ENCODE measurements at regions of chr15 and their contacts with region 1.

Region 1: DNA sequence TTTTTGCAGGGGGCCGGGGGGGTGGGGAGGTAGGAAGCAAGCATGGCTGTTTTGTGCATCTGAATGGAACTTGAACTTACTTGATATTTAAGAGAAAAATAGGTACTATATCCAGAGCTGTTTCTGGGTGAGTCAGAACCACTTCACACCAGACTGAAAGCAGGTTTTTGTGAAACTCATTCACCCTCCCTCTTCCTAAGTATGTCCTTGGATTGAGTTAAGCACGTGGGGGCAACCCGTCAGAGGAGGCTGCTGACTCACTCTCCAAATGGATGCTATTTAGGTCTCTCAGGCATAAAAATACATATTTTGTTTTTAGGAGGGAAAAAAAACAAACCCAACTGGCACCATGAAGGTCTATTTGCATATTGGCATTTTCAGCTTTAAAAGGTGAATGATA is 270.3 kb downstream of the RYR3 start:
- DNase-seq: no peak
- ATAC-seq: no peak

Region 2: DNA sequence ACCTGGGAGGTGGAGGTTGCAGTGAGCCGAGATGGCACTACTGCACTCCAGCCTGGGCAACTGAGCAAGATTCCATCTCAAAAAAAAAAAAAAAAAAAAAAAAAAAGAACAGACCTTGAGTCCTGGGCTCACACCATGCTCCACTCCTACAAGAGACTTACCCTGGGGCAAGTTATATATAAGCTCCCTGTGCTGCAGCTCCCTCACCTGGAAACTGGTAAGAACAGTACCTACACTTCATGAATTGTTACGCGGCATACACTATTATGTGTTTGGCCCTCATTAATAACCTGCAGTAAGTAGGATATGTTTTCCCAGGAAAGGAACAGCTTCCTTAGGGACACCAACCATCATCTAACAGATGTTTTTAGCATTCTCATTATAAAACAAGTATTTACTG is 506.1 kb before region 1 on chr15:
- intact Hi-C with region 1: loop called (anchors 10 kb)
- DNase-seq: no peak
- ATAC-seq: no peak

Region 3: DNA sequence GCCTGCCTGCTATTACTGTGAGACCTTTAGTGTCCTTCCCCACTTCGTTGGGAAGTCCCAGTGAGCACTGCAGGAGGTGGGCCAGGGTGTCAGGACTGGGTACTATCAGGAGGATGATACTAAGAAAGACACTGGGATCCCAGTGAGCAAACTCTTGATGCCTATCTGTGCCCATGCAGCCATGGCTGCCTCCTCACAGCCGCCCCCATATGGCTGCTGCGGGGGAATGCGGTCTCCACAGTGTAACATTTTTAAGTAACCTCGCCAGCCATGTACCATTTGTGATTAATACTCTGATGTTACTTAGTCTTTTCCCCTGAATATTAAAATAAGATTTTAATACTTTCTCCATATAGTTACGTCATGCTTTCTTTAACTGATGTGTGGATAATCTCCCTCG is 42.0 kb after region 1 on chr15:
- intact Hi-C with region 1: no loop called
- DNase-seq: no peak
- ATAC-seq: no peak

Region 4: DNA sequence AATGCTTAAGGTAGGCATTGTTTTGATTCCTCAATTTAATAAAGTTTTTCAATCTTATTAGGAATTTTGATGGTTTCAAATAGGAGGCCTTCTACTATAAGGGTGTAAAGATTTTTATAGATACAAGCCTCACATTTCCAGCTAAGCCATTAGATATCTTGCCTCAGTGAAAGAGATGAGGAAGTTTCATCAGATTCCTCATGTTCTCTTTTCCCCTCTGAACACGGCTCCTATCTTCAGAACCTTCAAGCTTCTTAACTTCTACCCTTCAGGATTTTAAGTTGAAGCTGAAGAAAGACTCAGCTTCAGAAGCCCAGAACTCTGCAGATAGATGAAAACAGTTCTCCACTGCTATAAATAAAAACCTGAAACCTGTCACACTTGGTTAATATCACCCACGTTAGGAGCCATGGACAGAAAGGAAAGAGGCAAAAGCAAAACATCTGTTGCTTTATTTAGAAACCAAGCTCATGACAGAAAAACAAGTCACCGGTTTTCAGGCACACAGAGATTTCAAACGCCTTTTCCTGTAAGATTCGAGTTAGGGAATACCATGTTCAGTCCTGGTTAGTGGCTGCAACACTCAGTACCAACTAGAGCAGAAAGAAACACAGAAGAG is 1084.6 kb after region 1 on chr15:
- intact Hi-C with region 1: no loop called
- DNase-seq: no peak
- ATAC-seq: no peak